ENCODE measurements at regions of chr1 and their contacts with region 1.

Region 1: DNA sequence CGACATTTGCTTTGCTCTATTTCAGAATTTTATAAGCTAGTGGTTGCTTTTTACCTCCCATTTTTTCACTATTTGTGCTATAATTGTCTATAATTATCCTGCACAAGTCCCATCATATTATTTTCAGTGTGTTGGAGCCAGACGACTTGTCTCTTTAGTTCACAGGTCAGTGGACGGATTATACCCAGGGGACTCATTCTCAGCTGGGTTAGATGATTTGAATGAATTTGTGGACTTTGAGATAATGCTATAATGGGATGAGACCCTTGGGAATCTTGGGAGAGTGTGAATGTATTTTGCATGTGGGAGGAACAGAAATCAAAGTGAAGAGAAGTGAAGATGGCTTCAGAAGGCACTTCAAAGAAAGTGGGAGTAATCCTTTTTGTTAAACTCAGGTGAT is 31.5 kb upstream of the KCNK1 start:
- DNase-seq: no peak
- H3K4me3 ChIP-seq: no peak overlapping the region
- H3K27ac ChIP-seq: no peak overlapping the region
- H3K4me1 ChIP-seq: no peaks in the 10 kb centered on the region
- H3K27me3 ChIP-seq: no peaks in the 10 kb centered on the region
- CTCF ChIP-seq: no peak

Region 2: DNA sequence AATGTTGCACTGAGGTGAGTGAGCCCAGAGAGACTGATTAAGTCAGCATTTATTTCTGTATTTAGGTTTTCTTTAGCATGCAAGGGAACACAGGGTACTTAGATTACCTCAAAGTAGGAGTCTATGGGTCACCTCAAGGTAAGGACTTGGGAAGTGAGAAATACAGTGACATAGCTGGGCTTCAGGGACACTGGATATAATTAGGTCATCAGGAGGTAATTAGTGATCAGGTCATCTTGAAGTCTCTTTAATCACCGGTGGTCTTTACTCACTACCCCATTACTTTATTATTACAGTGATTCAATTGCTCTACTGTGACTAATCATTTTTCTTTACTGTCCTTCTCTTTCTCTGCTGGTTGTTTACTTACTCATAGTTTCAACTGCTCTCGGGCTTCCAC is 28.4 kb before region 1 on chr1:
- CTCF ChIA-PET with region 1: no interaction called
- POLR2A ChIA-PET with region 1: no interaction called
- intact Hi-C with region 1: loop called (anchors 2 kb)
- DNase-seq: no peak
- H3K4me3 ChIP-seq: no peak overlapping the region
- H3K27ac ChIP-seq: no peak overlapping the region
- H3K4me1 ChIP-seq: no peaks in the 10 kb centered on the region
- H3K27me3 ChIP-seq: no peaks in the 10 kb centered on the region
- CTCF ChIP-seq: no peak

Region 3: GRCh38 chr1:234452091-234452954 is 869.9 kb after region 1 on chr1:
- CTCF ChIA-PET with region 1: no interaction called
- POLR2A ChIA-PET with region 1: no interaction called
- intact Hi-C with region 1: no loop called
- DNase-seq: no peak
- H3K4me3 ChIP-seq: no peak overlapping the region
- H3K27ac ChIP-seq: no peak overlapping the region
- H3K4me1 ChIP-seq: no peaks in the 10 kb centered on the region
- H3K27me3 ChIP-seq: no peaks in the 10 kb centered on the region
- CTCF ChIP-seq: no peak

Measured in PC-9 (cell line).